Head of caudate nucleus (tissue), 42 donors: ENCODE measurements at regions of chr4 and their contacts with region 1.

Region 1: DNA sequence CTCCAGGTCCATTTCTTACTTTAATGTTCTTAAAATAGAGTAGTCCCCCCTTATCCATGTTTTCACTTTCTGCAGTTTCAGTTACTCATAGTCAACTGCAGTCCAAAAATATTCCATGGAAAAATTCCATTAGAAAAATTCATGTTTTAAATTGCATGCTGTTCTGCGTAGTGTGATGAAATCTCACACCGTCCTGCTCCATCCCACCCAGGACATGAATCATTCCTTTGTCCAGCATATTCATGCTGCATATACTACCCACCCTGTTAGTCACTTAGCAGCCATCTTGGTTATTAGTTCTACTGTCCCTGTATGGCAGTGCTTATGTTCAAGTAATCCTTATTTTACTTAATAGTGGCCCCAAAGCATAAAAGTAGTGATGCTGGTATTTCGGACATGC is 5.4 kb upstream of the PDLIM5 start:
- DNase-seq: no peak

Region 2: DNA sequence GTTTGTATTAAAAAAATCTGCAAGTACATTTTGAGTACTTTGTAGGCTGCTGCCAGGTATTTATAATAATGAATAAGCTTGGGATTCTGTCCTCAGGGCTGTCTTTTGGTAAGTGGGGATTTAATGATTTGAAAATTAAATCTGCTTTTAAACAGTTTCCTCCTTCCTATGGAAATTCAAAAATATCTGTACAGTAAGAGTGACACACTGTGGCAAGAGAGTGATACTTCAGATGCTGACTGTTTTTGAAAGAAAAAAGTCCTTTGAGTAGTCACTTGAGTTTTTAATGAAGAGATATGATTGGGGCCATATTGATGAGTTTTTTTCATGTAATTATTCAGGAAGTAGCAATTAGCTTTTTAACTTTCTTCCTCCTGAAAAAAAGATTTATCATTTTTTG is 189.6 kb before region 1 on chr4:
- intact Hi-C with region 1: no loop called
- DNase-seq: no peak

Region 3: DNA sequence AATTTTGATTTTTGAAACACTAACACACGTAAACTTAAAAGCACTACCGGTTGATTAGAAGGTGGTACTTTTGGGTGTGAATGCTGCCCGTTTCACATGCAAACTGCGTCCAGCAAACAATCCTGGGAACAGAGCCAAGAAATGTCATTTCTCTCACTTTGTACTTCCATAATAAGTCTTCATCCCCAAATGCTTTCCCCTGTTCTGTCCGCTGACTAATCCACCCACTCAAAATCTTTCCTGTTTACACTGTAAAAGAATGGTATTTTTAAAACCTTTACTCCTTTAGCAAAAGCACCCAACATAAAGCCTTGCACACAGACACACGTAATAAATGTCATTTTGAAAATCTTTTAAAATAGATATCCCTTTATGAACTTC is 33.7 kb before region 1 on chr4:
- intact Hi-C with region 1: loop called (anchors 5 kb)
- DNase-seq: no peak